ENCODE measurements at regions of chr3 and their contacts with region 1.

Region 1: DNA sequence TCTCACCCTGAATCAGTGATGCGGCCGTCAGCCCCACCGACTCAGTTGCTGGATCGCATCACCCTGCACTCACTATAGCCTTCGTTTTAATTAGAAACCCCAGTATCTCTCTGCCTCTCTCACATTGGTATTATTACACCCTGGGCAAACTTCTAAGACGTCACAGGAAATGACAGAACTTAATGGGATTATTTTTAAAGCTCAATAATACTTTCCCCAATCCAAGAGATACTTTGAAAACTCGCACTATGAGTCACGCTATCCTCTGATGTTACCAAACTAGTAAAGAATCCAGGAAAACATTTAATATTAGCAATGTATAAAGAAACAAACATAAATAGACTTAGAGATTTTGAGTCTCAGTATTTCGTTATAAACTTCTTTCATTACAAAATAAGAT is 36.6 kb downstream of the RUBCN start:
- DNase-seq: no peak
- H3K4me3 ChIP-seq: no peak overlapping the region
- H3K27ac ChIP-seq: no peak overlapping the region
- H3K4me1 ChIP-seq: no peaks in the 10 kb centered on the region
- H3K27me3 ChIP-seq: no peaks in the 10 kb centered on the region
- CTCF ChIP-seq: no peak
- EP300 ChIP-seq: no peak
- POLR2A ChIP-seq: no peak

Region 2: DNA sequence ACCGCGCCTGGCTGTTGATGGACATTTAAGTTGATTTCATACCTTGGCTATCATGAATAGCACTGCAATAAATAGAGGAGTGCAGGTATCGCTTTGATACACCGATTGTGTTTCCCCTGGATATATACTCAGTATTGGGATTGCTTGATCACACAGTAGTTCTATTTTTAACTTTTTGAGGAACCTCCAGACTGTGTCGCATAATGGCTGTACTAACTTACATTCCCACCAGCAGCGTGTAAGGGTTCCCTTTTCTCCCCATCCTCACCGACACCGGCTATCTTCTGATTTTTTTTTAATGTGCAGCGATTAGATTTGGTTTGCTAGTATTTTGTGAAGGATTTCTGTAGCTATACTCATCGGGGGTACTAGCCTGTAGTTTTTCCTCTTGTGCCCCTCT is 20.6 kb after region 1 on chr3:
- intact Hi-C with region 1: loop called in 1 of 4 experiments (anchors 2 kb)
- DNase-seq: no peak
- H3K4me3 ChIP-seq: no peak overlapping the region
- H3K27ac ChIP-seq: no peak overlapping the region
- H3K4me1 ChIP-seq: no peaks in the 10 kb centered on the region
- H3K27me3 ChIP-seq: no peaks in the 10 kb centered on the region
- CTCF ChIP-seq: no peak
- EP300 ChIP-seq: no peak
- POLR2A ChIP-seq: no peak

Region 3: GRCh38 chr3:197820550-197821335 is 120.6 kb after region 1 on chr3:
- intact Hi-C with region 1: no loop called
- DNase-seq: no peak
- H3K4me3 ChIP-seq: no peak overlapping the region
- H3K27ac ChIP-seq: no peak overlapping the region
- H3K4me1 ChIP-seq: peaks cover 6% of the 10 kb centered on the region
- H3K27me3 ChIP-seq: no peaks in the 10 kb centered on the region
- CTCF ChIP-seq: no peak
- EP300 ChIP-seq: no peak
- POLR2A ChIP-seq: no peak